Right ventricle myocardium inferior (tissue), 1 donor: ENCODE measurements at regions of chr1 and their contacts with region 1.

Region 1: DNA sequence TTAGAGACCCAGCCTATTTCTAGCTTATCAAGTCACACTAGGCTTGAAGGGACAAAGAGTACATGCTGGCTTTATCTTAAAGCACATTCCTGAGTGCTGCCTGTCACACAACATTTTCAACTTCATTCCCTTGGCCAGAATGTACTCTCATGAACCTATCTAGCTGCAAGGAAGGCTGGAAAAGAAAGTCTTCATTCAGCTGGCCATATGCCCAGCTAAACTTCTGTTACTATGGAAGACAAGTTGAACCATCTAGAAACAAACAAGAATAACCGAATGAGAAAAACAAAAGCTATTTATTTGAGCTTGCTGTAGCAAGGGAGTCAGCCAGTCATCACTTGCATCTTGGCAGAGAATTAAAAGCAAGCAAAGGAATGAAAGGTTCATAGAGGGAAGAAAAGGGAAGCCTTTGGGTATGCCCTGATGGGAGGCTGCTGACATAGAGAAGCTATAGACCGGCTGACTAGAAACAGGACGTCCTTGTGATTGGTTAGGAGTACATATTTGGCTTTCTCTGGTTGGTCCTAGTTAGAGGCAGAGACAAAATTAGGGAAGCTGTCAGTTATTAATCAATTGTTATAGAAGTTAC is 108.4 kb downstream of the NEK7 start:
- DNase-seq: no peak
- ATAC-seq: peak; percentile 96

Region 2: GRCh38 chr1:198201956-198202784 is 63.0 kb before region 1 on chr1:
- intact Hi-C with region 1: loop called (anchors 5 kb)
- DNase-seq: no peak
- ATAC-seq: no peak